Activated naive CD4-positive, alpha-beta T cell treated with anti-CD3 and anti-CD28 coated beads, Interleukin-2, amount 10 ng/mL, durations not matched to agents 7 days and 5 days (primary cell): ENCODE measurements at regions of chr10 and their contacts with region 1.

Region 1: GRCh38 chr10:114519284-114519624 is 115.0 kb upstream of the AFAP1L2 start:
- DNase-seq: no peak
- H3K4me3 Mint-ChIP-seq: no peak overlapping the region
- H3K27ac Mint-ChIP-seq: peak overlapping the region; percentile 43
- H3K4me1 Mint-ChIP-seq: peaks cover 99% of the 10 kb centered on the region
- H3K27me3 Mint-ChIP-seq: no peaks in the 10 kb centered on the region

Region 2: GRCh38 chr10:114285961-114286441 is 233.3 kb before region 1 on chr10:
- CTCF ChIA-PET with region 1: no interaction called
- DNase-seq: no peak
- H3K4me3 Mint-ChIP-seq: no peak overlapping the region
- H3K27ac Mint-ChIP-seq: no peak overlapping the region
- H3K4me1 Mint-ChIP-seq: no peaks in the 10 kb centered on the region
- H3K27me3 Mint-ChIP-seq: no peaks in the 10 kb centered on the region

Region 3: DNA sequence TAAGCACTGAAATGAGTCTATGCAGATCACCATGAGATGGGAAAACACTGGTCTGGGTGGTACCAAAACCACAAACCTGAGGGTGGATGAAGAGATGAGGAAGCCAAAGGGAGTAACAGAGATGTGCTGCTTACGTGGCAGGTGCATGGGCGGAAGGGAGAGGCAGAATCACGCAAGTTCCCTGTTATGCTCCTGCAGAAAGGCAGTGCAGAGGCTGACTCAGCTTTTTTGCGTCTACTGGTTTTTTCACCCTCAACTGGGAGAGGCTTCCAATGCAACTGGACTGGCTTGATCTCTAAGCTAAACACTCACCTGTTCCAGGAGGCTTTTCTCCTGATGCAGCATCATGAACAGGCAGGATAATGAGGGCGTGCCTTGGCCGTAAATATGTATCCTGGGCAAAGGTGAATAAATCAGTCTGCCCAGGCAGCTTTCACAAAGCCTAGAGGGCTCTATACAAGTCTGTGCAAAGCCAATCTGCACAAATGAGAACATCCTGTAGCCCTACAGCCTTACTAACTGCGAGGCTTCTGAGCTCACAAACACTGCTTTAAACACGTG is 19.5 kb before region 1 on chr10:
- CTCF ChIA-PET with region 1: interaction called, 17 read pairs
- DNase-seq: peak; percentile 73
- H3K4me3 Mint-ChIP-seq: peak overlapping the region; percentile 31
- H3K27ac Mint-ChIP-seq: peak overlapping the region; percentile 92
- H3K4me1 Mint-ChIP-seq: peaks cover 89% of the 10 kb centered on the region
- H3K27me3 Mint-ChIP-seq: no peaks in the 10 kb centered on the region